ENCODE measurements at regions of chr17 and their contacts with region 1.

Region 1: GRCh38 chr17:60047046-60047445 is 31.7 kb downstream of the HEATR6 start:
- DNase-seq: no peak
- H3K27ac ChIP-seq: no peak overlapping the region
- CTCF ChIP-seq: no peak

Region 2: GRCh38 chr17:60036796-60037612 is 10.0 kb before region 1 on chr17:
- CTCF ChIA-PET with region 1: interaction called, 13 read pairs
- POLR2A ChIA-PET with region 1: no interaction called
- DNase-seq: peak; percentile 53
- H3K27ac ChIP-seq: no peak overlapping the region
- CTCF ChIP-seq: peak; percentile 96

Region 3: GRCh38 chr17:60161674-60162546 is 114.9 kb after region 1 on chr17:
- CTCF ChIA-PET with region 1: no interaction called
- POLR2A ChIA-PET with region 1: no interaction called
- DNase-seq: no peak
- H3K27ac ChIP-seq: no peak overlapping the region
- CTCF ChIP-seq: no peak